Left cardiac atrium (tissue), 4 donors: ENCODE measurements at regions of chr13 and their contacts with region 1.

Region 1: GRCh38 chr13:99380921-99381645 is 73.9 kb upstream of the GPR183 start:
- DNase-seq: no peak
- ATAC-seq: peak; percentile 86 to 87

Region 2: GRCh38 chr13:99288089-99288488 is 93.0 kb before region 1 on chr13:
- intact Hi-C with region 1: loop called in 1 of 2 experiments (anchors 5 kb)
- DNase-seq: no peak
- ATAC-seq: peak in 1 of 2 donors; percentile 41